Endothelial cell of umbilical vein (primary cell): ENCODE measurements at regions of chr2 and their contacts with region 1.

Region 1: DNA sequence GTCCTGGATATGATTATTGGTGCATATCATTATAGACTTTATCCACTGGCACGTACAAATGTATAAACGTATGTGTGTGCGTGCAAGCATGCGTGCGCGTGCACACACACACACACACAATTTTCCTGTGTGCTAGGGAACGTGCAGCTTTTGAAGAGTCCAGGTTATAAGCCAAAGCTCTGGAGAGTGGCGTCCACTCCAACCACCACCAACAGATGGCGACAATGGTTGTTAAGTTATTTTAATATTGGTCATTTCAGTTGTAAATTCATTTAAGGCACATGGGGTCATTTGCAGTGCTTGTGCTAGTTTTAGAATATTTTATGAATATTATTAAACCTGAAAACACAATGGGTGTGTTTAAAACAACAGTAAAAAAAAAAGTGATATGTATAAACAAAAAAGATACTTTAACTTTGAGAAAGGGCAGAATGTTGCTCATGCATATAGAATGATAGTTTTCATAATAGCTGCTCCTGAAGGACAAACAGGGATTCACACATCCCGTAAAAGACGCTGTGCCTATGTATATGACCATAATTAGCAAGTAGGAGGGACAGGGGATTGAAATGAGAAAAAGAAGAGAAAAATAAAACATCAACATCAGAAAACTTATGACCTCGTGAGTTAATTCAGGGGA is 124.2 kb upstream of the ITGB6 start:
- DNase-seq: peak; percentile 74
- H3K4me3 ChIP-seq: no peak overlapping the region
- H3K27ac ChIP-seq: no peak overlapping the region
- H3K4me1 ChIP-seq: no peaks in the 10 kb centered on the region
- H3K27me3 ChIP-seq: no peaks in the 10 kb centered on the region
- CTCF ChIP-seq: peak; percentile 63
- POLR2A ChIP-seq: no peak

Region 2: GRCh38 chr2:160109936-160110673 is 214.2 kb before region 1 on chr2:
- CTCF ChIA-PET with region 1: interaction called, 32 read pairs
- POLR2A ChIA-PET with region 1: no interaction called
- dilution Hi-C with region 1: no loop called
- intact Hi-C with region 1: no loop called
- DNase-seq: peak; percentile 83
- H3K4me3 ChIP-seq: no peak overlapping the region
- H3K27ac ChIP-seq: no peak overlapping the region
- H3K4me1 ChIP-seq: no peaks in the 10 kb centered on the region
- H3K27me3 ChIP-seq: no peaks in the 10 kb centered on the region
- CTCF ChIP-seq: peak; percentile 66 to 72
- POLR2A ChIP-seq: no peak

Region 3: GRCh38 chr2:160278879-160279177 is 45.5 kb before region 1 on chr2:
- CTCF ChIA-PET with region 1: interaction called, 11 read pairs
- POLR2A ChIA-PET with region 1: no interaction called
- dilution Hi-C with region 1: no loop called
- intact Hi-C with region 1: no loop called
- DNase-seq: peak; percentile 58
- H3K4me3 ChIP-seq: no peak overlapping the region
- H3K27ac ChIP-seq: peak overlapping the region; percentile 80
- H3K4me1 ChIP-seq: peaks cover 44% of the 10 kb centered on the region
- H3K27me3 ChIP-seq: no peaks in the 10 kb centered on the region
- CTCF ChIP-seq: peak; percentile 29 to 50
- POLR2A ChIP-seq: peak; percentile 0

Region 4: GRCh38 chr2:160375802-160376469 is 51.7 kb after region 1 on chr2:
- CTCF ChIA-PET with region 1: interaction called, 14 read pairs
- POLR2A ChIA-PET with region 1: no interaction called
- dilution Hi-C with region 1: no loop called
- intact Hi-C with region 1: no loop called
- DNase-seq: peak; percentile 66
- H3K4me3 ChIP-seq: peak overlapping the region in 1 of 3 experiments; percentile 22
- H3K27ac ChIP-seq: peak overlapping the region; percentile 85
- H3K4me1 ChIP-seq: peaks cover 97% of the 10 kb centered on the region
- H3K27me3 ChIP-seq: no peaks in the 10 kb centered on the region
- CTCF ChIP-seq: no peak
- POLR2A ChIP-seq: peak; percentile 58

Region 5: GRCh38 chr2:160918906-160919503 is 594.7 kb after region 1 on chr2:
- CTCF ChIA-PET with region 1: interaction called, 33 read pairs
- POLR2A ChIA-PET with region 1: no interaction called
- dilution Hi-C with region 1: no loop called
- intact Hi-C with region 1: loop called (anchors 2 kb)
- DNase-seq: peak; percentile 68
- H3K4me3 ChIP-seq: no peak overlapping the region
- H3K27ac ChIP-seq: no peak overlapping the region
- H3K4me1 ChIP-seq: peaks cover 11% of the 10 kb centered on the region
- H3K27me3 ChIP-seq: no peaks in the 10 kb centered on the region
- CTCF ChIP-seq: peak; percentile 68 to 73
- POLR2A ChIP-seq: no peak

Region 6: GRCh38 chr2:161004379-161004778 is 680.1 kb after region 1 on chr2:
- CTCF ChIA-PET with region 1: interaction called, 14 read pairs
- POLR2A ChIA-PET with region 1: no interaction called
- dilution Hi-C with region 1: no loop called
- intact Hi-C with region 1: no loop called
- DNase-seq: peak; percentile 22
- H3K4me3 ChIP-seq: no peak overlapping the region
- H3K27ac ChIP-seq: no peak overlapping the region
- H3K4me1 ChIP-seq: no peaks in the 10 kb centered on the region
- H3K27me3 ChIP-seq: no peaks in the 10 kb centered on the region
- CTCF ChIP-seq: peak; percentile 21 to 31
- POLR2A ChIP-seq: no peak